Naive thymus-derived CD4-positive, alpha-beta T cell (primary cell): ENCODE measurements at regions of chr1 and their contacts with region 1.

Region 1: GRCh38 chr1:17135530-17135929 is 16.3 kb upstream of the PADI2 start:
- DNase-seq: no peak
- ATAC-seq: no peak
- H3K4me3 ChIP-seq: no peak overlapping the region
- H3K4me3 Mint-ChIP-seq: no peak overlapping the region
- H3K27ac ChIP-seq: no peak overlapping the region
- H3K27ac Mint-ChIP-seq: no peak overlapping the region
- H3K4me1 ChIP-seq: no peaks in the 10 kb centered on the region
- H3K4me1 Mint-ChIP-seq: peaks cover 0 to 5% (median 0%) of the 10 kb centered on the region in 7 donors
- H3K27me3 ChIP-seq: no peaks in the 10 kb centered on the region
- H3K27me3 Mint-ChIP-seq: peaks cover 0 to 24% (median 7%) of the 10 kb centered on the region in 5 donors

Region 2: DNA sequence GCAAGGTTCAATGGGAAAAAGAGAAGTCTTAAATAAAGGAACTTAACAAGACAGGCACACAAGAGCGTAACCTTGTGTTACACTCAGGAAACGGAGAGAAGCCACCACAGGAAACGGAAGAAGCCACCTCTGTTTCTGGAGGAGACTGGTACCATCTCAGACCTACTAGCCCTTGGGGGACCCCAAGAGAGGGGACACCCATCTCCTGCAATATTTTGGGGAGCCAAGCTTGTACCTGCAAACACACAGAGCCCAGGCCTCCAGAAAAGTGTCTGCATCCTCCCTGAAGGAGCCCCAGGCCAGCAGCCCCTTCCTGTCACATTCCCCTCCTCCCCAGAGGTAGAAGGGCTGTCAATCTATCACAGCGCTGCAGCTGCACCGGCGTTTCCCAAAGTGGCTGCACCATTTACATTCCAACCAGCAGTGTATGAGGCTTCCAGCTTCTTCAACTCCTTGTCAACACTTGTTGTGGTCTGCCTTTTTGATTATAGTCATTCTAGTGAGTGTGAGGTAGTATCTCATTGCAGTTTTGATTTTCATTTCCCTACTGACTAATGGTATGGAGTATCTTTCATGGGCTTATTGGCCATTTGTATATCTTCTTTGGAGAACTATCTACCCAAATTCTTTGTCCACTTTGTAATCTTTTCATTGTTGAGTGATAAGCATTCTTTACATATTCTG is 46.4 kb after region 1 on chr1:
- CTCF ChIA-PET with region 1: no interaction called
- POLR2A ChIA-PET with region 1: no interaction called
- intact Hi-C with region 1: loop called in 1 of 2 experiments (anchors 10 kb)
- DNase-seq: peak in 4 of 9 donors; percentile 37 to 54 (median 42)
- ATAC-seq: peak; percentile 57
- H3K4me3 ChIP-seq: peak overlapping the region; percentile 8
- H3K4me3 Mint-ChIP-seq: peak overlapping the region; percentile 6 to 85 (median 74)
- H3K27ac ChIP-seq: peak overlapping the region; percentile 39
- H3K27ac Mint-ChIP-seq: peak overlapping the region in 7 of 9 donors; percentile 34 to 80 (median 62)
- H3K4me1 ChIP-seq: peaks cover 13 to 22% of the 10 kb centered on the region in 2 donors
- H3K4me1 Mint-ChIP-seq: peaks cover 26 to 78% (median 55%) of the 10 kb centered on the region in 7 donors
- H3K27me3 ChIP-seq: no peaks in the 10 kb centered on the region
- H3K27me3 Mint-ChIP-seq: peaks cover 0 to 37% (median 7%) of the 10 kb centered on the region in 5 donors

Region 3: DNA sequence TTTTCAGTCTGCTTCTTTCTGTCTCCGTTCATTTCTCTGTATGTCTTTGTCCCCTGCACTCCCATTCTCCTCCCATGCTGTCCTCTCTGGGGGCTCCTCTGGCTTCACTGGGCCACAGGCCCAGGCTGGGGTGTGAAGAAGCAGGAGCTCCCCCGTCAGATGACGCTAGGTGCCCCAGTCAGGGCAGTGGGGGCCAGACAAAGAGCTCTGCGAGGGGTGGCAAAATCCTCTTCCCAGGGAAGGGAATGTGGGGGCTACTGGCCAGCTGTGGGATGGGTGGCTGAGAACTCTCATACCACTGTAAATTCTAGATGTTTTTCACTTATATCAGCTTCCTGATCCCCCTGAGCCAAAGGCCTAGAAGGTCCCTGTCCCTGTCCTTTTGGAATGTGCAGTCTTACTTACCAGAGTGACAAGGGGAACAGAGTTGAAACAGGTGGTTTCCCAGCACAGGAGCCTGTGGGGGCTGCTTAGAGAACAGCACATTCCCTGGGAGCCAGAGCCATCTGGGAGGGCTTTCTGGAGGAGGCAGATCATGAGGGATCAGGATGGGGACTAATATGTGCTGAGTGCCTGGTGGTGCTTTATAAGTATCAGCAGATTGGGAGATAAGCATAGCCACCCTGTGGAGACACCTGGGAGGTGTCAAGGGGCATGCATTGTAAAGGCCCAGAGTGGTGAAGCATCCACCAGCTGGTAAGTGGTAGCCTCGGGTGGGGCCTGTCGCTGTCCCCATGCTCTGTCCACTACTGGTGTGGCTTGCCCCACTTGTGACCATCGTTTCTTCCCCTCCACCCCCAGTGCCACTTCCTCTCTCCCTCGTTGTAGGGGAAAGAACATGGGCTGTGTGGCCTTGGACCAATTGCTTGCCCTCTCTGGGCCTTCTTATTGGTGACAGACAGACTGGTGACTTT is 59.3 kb after region 1 on chr1:
- CTCF ChIA-PET with region 1: no interaction called
- POLR2A ChIA-PET with region 1: no interaction called
- intact Hi-C with region 1: no loop called
- DNase-seq: no peak
- ATAC-seq: no peak
- H3K4me3 ChIP-seq: no peak overlapping the region
- H3K4me3 Mint-ChIP-seq: no peak overlapping the region
- H3K27ac ChIP-seq: no peak overlapping the region
- H3K27ac Mint-ChIP-seq: peak overlapping the region in 3 of 9 donors; percentile 41 to 74 (median 41)
- H3K4me1 ChIP-seq: no peaks in the 10 kb centered on the region
- H3K4me1 Mint-ChIP-seq: peaks cover 0 to 27% (median 10%) of the 10 kb centered on the region in 7 donors
- H3K27me3 ChIP-seq: no peaks in the 10 kb centered on the region
- H3K27me3 Mint-ChIP-seq: peaks cover 0 to 11% (median 5%) of the 10 kb centered on the region in 5 donors